H1 (cell line): ENCODE measurements at regions of chr10 and their contacts with region 1.

Region 1: DNA sequence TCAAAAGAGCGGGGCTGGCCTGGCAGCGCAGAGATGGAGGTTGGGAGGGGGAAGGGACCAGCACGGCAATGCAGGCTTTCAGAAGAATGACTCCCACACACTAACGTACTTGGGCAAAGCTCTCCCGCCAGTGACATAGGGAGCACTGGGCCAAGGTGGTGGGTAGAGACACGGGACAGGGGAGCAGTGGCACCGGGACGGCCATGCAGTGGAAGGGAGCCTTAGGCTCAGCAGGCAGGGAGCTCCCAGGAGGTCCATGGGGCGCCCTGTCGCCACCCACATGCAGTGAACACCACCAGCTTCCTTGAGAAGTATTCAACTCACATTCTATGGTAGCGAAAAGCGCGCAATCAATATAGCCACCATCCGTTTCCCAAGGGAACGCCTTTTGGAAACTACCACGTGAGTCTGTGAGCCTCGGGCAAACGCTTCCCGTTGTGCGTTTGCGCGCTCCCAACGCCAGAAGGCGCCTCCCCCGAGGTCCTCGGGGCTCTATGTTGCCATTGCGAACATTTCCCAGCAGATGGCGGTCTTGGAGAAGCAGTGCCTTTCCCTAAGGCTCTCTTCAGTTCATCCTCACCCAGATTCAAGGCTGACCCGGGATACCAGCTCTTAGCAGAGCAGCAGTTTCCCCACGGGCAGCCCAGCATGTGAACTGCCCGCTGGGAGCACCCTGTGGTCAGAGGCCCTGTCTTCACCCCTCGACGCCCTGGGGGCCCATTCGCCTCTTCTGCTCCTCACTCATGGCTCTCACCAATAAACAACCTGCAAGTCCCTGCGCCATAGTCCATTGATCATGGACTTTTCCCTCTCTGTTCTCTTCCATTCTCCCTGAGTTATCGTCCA is 16.4 kb upstream of the OPALIN start:
- DNase-seq: peak; percentile 80 to 93
- H3K4me3 ChIP-seq: peak overlapping the region; percentile 30 to 56 (median 47); a peak in 7 of 8 replicates
- H3K27ac ChIP-seq: no peak overlapping the region
- H3K4me1 ChIP-seq: peaks cover 0 to 13% (median 7%) of the 10 kb centered on the region in 4 experiments; a peak in 6 of 7 replicates
- H3K27me3 ChIP-seq: peaks cover 0 to 3% (median 1%) of the 10 kb centered on the region in 4 experiments; a peak in 3 of 7 replicates
- CTCF ChIP-seq: peak; percentile 95 to 100 (median 100)
- EP300 ChIP-seq: no peak
- POLR2A ChIP-seq: no peak
- RAD21 ChIP-seq: peak; percentile 95 to 96

Region 2: DNA sequence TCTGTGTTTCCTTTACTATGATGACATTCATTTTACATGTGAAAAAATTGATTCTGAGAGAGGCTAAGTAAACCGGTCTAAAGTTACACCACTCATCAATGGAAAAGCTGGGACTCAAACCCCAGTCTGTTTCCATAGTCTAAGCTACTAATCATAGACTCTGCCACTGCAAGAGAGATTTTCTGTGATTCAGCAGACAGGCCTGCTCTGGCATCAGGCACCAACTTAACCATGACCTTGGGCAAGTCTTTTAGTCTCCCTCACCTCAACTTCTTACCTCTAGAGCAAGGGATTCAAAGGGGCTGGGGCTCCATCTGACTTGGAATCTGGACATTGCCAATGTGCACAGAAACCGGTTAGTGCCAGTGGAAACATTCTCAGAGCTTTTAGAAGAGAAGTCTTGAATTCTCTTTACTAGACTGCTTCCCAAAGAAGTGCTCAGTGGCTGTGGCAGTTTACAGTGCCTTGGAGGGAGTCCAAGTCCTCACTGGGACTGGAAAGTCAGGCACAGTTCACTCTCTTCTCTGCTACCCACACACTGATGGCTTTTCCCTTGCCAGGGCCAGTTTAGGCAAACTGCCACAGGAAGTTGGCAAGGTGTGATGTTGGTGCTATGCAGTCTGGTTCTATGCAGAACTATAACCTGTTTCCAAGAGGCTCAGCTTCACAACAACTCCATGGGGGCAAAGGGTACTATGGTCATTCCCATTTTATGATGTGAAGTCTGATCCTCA is 99.4 kb before region 1 on chr10:
- CTCF ChIA-PET with region 1: no interaction called
- POLR2A ChIA-PET with region 1: no interaction called
- DNase-seq: no peak
- H3K4me3 ChIP-seq: no peak overlapping the region
- H3K27ac ChIP-seq: no peak overlapping the region
- H3K4me1 ChIP-seq: no peaks in the 10 kb centered on the region
- H3K27me3 ChIP-seq: no peaks in the 10 kb centered on the region
- CTCF ChIP-seq: no peak
- EP300 ChIP-seq: no peak
- POLR2A ChIP-seq: no peak
- RAD21 ChIP-seq: no peak

Region 3: DNA sequence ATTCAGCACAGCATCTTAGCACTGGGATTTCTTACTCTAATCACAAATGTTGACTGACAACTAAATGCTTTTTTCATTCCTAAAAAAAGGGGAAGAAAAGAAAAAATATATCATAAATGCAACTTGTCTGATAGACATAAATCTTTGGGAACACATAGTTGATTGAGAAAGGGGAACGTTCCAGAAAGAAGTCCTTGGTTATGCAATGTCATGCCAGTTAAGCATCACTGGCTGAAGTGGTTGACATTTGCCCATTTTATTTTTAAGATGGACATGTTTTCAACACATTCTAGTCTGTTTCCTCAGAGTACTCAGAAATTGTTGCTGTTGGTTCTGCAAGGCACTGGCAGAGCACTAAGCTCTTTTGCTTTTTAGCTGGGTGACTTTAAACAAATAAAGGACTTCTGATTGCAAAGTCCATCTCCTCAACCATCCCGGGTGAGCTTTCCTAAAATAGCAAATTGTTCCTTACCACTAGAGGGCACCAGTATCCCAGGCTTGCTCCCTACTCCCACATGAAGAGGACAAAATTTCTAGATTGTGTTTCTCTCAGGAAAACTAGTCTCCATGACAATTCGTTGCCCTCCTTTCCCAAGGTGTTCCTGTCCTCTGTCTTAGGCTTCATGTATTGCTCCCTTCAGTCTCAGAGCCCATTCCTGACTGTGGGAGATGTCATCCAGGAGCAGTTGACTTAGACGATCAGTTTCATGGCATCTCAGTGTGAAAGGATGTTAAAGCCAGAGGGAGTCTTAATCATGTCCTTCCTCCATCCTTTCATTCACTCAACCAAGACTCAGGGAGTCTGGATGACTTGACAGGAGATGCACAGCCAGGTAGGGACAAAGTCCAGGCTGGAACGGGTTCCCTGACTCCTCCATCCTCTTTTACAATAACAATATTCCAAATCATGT is 40.3 kb before region 1 on chr10:
- CTCF ChIA-PET with region 1: interaction called, 197 read pairs
- POLR2A ChIA-PET with region 1: no interaction called
- DNase-seq: peak in 1 of 2 experiments; percentile 50
- H3K4me3 ChIP-seq: no peak overlapping the region
- H3K27ac ChIP-seq: no peak overlapping the region
- H3K4me1 ChIP-seq: peaks cover 0 to 2% (median 1%) of the 10 kb centered on the region in 4 experiments; a peak in 1 of 7 replicates
- H3K27me3 ChIP-seq: 0 out of 7 replicates have a peak, but pooled peaks cover 0 to 1% (median 0%) of the 10 kb centered on the region in 4 experiments
- CTCF ChIP-seq: peak in 2 of 3 experiments; percentile 80 to 85; a peak in 3 of 4 replicates
- EP300 ChIP-seq: no peak; a peak in 1 of 3 replicates
- POLR2A ChIP-seq: no peak
- RAD21 ChIP-seq: peak; percentile 79 to 85

Region 4: DNA sequence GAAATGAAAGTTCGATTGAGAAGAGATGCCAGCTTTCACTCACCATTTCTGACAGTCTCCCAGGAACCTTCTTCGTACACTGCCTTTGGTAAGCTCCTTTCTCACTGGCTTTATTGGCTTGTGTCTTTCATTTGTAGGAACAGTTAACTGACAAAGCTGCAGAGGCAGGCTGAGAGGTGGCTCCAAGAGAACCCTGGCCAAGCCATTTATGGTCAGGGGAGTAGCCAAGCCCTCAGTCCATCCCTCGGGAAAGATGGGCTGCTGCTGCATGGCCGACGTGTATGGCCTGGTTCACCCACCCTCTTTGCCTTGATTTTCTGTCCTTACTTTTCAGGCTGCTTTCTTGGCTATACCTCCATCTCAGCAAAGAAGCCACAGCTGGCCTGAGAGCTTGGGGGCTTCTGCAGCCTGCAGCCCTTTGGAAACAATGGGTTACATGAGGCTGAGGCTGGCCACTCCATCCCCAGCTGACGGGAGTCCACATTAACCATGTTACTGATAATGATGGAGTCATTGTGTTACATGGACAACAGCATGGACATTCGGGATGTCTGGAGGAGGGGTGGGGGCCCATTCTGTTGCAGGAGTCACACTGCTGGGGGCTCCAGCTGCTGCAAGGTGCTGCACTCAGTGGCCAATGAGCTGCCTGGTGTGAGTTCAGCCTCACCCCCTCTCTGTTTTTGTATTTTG is 16.2 kb before region 1 on chr10 and contains the start of gene OPALIN:
- CTCF ChIA-PET with region 1: interaction called, 34 read pairs
- POLR2A ChIA-PET with region 1: no interaction called
- DNase-seq: no peak
- H3K4me3 ChIP-seq: no peak within 1 kb of the TSS
- H3K27ac ChIP-seq: no peak within 1 kb of the TSS
- H3K4me1 ChIP-seq: no peaks in the 10 kb centered on the region
- H3K27me3 ChIP-seq: no peaks in the 10 kb centered on the region; a peak in 1 of 7 replicates
- CTCF ChIP-seq: no peak
- EP300 ChIP-seq: no peak
- POLR2A ChIP-seq: no peak
- RAD21 ChIP-seq: no peak
- total RNA-seq, gene OPALIN: not detected in 2 replicates

Region 5: DNA sequence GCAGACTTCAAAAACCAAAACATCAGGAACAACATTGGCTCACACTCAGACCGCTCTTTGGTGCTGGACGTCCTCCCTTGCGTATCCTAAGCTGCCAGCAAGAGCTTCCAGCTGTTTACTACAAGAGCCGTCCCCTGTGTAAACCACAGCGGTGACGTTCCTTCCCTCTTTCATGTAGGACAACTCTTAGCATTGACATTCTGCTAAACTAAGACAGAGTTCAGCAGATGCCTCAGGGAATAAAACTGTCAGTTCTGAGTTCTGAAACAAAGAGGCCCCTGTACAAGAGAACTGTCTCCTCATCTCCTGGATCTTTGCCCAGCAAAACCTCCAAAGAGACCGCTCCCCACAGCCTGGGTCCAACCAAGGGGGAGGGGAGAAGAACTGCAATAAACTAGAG is 41.4 kb after region 1 on chr10:
- CTCF ChIA-PET with region 1: interaction called, 36 read pairs
- POLR2A ChIA-PET with region 1: no interaction called
- DNase-seq: peak in 1 of 2 experiments; percentile 27
- H3K4me3 ChIP-seq: no peak overlapping the region
- H3K27ac ChIP-seq: no peak overlapping the region
- H3K4me1 ChIP-seq: no peaks in the 10 kb centered on the region
- H3K27me3 ChIP-seq: no peaks in the 10 kb centered on the region
- CTCF ChIP-seq: no peak
- EP300 ChIP-seq: no peak
- POLR2A ChIP-seq: no peak
- RAD21 ChIP-seq: no peak

Region 6: DNA sequence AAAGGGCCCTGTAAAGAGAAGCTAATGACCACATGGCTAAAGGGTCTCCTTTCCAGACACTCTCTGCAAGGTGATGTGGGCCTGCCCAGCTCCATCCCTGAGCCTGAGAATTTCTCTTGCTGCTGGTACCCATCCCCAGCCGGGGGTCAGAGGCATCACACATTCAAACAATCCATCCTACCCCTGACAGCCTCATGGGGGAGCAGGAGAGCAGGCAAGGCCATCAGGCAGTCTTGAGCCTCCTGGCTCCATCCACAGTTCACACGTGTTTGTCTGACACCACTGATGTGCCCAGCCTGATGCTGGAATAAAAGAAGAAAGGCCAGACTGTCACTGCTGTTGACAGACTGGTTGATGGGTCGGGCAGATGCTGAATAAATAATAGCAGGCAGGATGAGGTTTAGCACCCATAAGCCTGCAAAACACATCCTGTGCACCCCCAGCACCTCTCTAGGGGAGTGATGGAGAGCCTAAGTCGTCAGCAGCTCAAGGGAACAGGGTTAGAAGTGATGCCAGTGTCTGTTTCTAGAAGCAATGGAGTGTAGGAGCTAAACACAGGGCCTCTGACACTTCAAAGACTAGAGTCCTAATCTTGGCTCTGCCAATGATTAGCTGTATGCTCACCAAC is 95.0 kb after region 1 on chr10:
- CTCF ChIA-PET with region 1: interaction called, 14 read pairs
- POLR2A ChIA-PET with region 1: no interaction called
- DNase-seq: peak in 1 of 2 experiments; percentile 84
- H3K4me3 ChIP-seq: no peak overlapping the region
- H3K27ac ChIP-seq: no peak overlapping the region
- H3K4me1 ChIP-seq: peaks cover 2 to 6% (median 4%) of the 10 kb centered on the region in 4 experiments; a peak in 4 of 7 replicates
- H3K27me3 ChIP-seq: no peaks in the 10 kb centered on the region
- CTCF ChIP-seq: peak; percentile 82 to 94 (median 94)
- EP300 ChIP-seq: no peak
- POLR2A ChIP-seq: no peak
- RAD21 ChIP-seq: peak; percentile 56 to 76

Region 7: DNA sequence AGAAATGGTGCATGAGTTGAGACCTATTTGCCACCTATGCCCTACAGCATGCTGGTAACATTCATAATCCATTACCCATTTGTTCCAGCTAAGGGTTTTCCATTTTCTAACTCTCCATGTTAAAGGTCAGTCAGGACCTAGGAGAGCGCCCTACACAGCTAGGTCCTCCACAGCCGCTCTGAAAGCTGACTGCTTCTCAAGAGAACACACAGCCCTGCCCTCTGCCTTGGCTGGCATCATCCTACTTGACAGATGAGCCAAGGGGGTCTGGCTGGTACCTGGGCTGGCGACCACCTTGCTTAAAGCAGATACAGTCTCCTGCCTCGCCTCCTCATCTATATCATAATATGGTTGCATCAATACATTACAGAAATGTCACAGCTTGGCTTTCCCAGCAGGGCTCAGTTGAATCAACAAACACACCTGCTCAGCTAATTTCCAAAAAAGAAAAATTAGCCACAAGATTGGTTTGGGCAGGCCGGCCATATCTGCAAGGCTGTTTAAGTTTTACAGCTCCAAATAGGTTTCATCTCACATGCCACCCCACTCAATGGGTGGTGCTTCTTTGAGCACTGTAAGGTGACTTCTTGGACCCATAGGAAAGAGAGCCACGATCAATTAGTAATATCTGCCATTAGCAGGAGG is 121.2 kb after region 1 on chr10:
- CTCF ChIA-PET with region 1: interaction called, 23 read pairs
- POLR2A ChIA-PET with region 1: interaction called, 3 read pairs
- DNase-seq: peak in 1 of 2 experiments; percentile 61
- H3K4me3 ChIP-seq: no peak overlapping the region
- H3K27ac ChIP-seq: no peak overlapping the region
- H3K4me1 ChIP-seq: peaks cover 0 to 3% (median 0%) of the 10 kb centered on the region in 4 experiments; a peak in 1 of 7 replicates
- H3K27me3 ChIP-seq: no peaks in the 10 kb centered on the region
- CTCF ChIP-seq: no peak
- EP300 ChIP-seq: no peak
- POLR2A ChIP-seq: no peak
- RAD21 ChIP-seq: no peak